Activated CD8-positive, alpha-beta T cell treated with anti-CD3 and anti-CD28 coated beads, Interleukin-2, amount 10 ng/mL, durations not matched to agents 7 days and 5 days (primary cell): ENCODE measurements at regions of chr14 and their contacts with region 1.

Region 1: DNA sequence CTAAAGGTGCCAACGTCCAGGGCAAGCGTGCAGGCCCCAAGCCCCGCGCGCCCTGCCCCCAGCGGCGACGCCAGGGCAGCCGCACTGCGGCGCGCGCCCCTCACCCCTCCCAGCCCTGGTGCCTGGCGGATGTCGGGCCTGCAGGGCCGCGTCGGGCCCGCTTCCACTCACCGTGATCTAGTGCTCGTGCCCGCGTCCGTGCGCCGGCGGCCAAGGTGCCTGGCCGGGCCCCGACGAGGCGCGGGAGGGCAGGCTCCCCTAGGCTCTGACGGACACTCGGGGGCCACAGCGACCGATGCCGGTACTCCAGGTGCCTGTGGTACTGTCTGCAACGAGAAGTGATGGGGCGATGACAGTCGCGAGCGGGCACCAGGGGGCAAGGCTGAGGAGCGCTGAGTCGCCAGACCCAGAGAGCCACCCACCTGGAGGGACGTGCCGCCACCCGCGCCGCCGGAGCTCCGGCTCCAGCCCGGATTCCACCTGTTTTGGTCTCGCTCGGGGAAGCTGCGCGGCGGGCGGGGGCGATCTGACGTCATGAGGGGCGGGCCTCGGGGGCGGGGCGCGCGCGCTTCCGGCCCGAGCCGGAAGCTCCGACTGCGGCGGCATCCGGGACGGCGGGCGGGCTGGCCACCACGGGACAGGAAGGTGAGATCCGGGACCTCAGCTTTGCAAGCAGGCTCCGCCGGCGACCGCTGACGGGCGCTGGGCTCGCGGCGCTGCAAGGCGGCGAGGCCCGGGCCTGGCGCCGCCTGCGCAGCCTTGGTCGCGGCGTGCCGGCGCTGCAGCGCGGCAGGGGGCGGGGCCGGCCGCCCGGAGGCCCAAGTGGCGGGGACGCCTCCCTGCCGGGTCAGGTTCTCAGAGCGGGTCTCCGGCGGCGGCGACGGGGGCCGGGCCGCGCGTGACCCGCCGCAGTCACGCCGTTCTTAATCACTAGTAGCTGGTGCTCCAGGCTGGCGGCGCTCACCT is at the starts of genes LYSET and MOAP1:
- DNase-seq: peak; percentile 94
- ATAC-seq: peak; percentile 93
- H3K4me3 Mint-ChIP-seq: peak within 1 kb of the TSS; percentile 95
- H3K27ac Mint-ChIP-seq: peak within 1 kb of the TSS; percentile 92
- H3K4me1 Mint-ChIP-seq: peaks cover 34% of the 10 kb centered on the region
- H3K27me3 Mint-ChIP-seq: no peaks in the 10 kb centered on the region
- total RNA-seq, gene LYSET: 9.7 to 10.6 TPM
- total RNA-seq, gene MOAP1: 21.0 to 21.5 TPM

Region 2: DNA sequence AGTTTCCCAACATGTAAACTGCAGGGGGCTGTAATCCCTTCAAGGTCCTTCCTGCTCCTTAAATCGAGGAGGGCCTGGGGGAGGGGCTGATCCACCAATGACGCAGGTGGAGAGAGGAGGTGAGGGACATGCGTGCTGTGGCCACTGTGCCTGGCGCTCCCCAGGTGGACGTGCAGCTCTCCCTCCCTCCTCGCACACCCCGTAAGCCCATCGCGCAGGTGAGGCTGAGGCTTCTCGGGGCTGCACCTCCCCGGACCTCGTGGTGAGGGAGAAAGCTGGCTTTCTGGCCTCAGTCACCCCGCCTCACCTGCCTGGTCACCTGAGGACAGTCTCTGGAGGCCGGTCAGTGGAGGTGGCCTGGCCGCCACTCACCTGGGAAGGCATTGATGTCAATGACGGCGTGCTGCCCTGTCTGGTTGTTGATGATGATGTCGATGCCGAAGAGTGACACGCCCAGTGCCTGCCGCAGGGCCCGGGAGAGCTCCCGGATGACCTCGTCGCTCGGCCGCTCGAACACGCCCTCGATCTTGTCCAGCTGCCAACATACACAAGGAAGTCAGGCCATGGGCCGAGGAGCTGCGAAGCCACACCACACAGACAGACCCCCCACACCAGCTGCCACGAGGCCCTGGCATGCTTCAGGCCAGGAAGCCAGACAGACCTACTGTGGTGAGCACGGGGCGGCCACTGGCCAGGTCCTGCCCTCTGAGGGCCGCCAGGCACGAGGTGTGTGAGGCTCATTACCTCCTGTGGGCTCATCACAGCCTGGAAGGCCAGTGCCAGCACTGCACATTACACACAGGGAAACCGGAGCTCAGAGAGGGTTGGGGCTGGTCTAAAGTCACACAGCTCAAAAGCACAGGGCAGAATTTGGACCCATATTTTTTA is 238.5 kb before region 1 on chr14:
- CTCF ChIA-PET with region 1: no interaction called
- POLR2A ChIA-PET with region 1: no interaction called
- DNase-seq: no peak
- ATAC-seq: no peak
- H3K4me3 Mint-ChIP-seq: no peak overlapping the region
- H3K27ac Mint-ChIP-seq: peak overlapping the region; percentile 30
- H3K4me1 Mint-ChIP-seq: no peaks in the 10 kb centered on the region
- H3K27me3 Mint-ChIP-seq: no peaks in the 10 kb centered on the region

Region 3: DNA sequence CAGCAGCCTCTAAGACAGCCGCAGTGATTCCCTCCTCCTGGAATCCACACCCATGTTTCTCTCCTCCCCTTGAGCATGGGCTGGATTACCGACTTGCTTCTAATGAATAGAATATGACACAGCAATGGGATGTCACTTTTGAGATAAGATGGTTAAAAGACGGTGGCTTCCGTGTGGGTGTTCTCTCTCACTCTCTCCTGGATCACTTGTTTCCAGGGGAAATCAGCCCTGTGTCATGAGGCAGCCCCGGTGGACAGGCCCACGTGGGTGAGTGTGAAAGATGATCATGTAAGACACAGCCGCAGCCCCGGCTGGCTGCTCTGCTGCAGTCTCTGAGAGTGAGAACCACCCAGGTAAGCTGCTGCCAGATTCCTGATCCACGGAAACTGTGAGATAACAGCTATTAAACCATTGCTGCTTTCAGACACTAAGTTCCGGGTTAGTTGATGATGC is 10.7 kb before region 1 on chr14:
- CTCF ChIA-PET with region 1: interaction called, 15 read pairs
- POLR2A ChIA-PET with region 1: interaction called, 4 read pairs
- DNase-seq: no peak
- ATAC-seq: no peak
- H3K4me3 Mint-ChIP-seq: no peak overlapping the region
- H3K27ac Mint-ChIP-seq: no peak overlapping the region
- H3K4me1 Mint-ChIP-seq: peaks cover 8% of the 10 kb centered on the region
- H3K27me3 Mint-ChIP-seq: peaks cover 2% of the 10 kb centered on the region

Region 4: DNA sequence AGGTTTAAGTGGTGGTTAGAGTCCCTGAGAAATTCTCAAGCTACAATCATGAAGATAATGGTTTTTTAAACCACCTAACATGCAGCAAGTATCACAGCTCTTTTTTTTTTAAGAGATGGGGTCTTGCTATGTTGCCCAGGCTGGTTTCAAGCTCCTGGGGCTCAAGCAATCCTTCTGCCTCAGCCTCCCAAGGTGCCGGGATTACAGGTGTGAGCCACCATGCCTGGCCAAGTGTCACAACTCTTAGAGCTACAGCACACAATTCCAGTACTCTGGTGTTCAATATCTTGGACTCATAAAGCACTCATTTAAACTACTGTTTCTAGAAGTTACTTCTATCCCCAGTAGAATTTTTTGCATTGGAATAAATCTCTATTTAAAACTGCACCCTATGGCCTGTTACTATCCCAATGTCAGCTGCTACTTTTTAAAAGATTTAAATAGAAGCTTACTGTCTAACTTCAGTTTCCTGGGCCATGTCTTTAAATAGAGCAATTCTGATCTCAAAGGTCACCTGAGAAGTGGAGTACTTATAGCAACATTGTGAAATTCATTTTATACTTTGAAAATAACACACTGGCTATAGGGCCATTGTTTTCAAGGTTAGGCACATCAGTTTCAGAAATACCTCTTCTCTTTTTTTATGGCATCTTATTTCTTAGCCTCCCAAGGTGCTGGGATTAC is 10.8 kb after region 1 on chr14:
- CTCF ChIA-PET with region 1: interaction called, 4 read pairs
- POLR2A ChIA-PET with region 1: interaction called, 11 read pairs
- DNase-seq: no peak
- ATAC-seq: no peak
- H3K4me3 Mint-ChIP-seq: no peak overlapping the region
- H3K27ac Mint-ChIP-seq: no peak overlapping the region
- H3K4me1 Mint-ChIP-seq: no peaks in the 10 kb centered on the region
- H3K27me3 Mint-ChIP-seq: no peaks in the 10 kb centered on the region

Region 5: GRCh38 chr14:93645200-93645599 is 460.5 kb after region 1 on chr14:
- CTCF ChIA-PET with region 1: no interaction called
- POLR2A ChIA-PET with region 1: no interaction called
- DNase-seq: no peak
- ATAC-seq: no peak
- H3K4me3 Mint-ChIP-seq: no peak overlapping the region
- H3K27ac Mint-ChIP-seq: no peak overlapping the region
- H3K4me1 Mint-ChIP-seq: no peaks in the 10 kb centered on the region
- H3K27me3 Mint-ChIP-seq: peaks cover 8% of the 10 kb centered on the region